SK-MEL-5 (cell line): ENCODE measurements at regions of chr18 and their contacts with region 1.

Region 1: GRCh38 chr18:58768293-58768974 is 96.2 kb upstream of the ZNF532 start:
- DNase-seq: peak; percentile 59

Region 2: DNA sequence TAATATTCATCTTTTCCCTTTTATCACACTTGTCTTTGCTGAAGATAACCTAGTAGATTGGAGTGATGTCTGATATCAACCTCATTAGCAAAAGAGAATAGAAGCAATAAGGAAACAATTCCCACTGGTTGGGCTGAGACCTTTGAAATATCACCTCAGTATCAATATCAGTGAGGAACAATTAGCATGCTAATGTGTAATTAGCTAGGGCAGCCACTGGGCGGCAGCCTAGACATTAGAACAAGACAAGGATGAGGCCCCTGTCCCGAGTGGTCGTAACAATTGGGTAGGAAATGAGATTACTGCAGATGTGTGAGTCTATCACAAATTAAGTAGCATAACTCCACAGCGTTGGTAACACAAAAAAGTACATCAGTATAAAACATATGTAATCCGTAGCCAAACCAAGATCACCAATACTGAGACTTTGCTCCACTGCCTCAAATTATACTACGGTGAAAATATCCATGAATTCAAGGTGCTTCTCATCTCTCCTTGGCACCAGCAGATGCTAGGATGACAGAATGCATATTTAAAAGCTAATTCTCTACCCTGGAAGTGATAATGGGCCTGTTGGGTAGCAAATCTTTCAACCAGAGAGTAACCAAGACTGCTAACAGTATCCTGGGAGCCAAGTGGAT is 238.6 kb before region 1 on chr18:
- in situ Hi-C with region 1: loop called (anchors 25 kb)
- DNase-seq: peak; percentile 69

Region 3: DNA sequence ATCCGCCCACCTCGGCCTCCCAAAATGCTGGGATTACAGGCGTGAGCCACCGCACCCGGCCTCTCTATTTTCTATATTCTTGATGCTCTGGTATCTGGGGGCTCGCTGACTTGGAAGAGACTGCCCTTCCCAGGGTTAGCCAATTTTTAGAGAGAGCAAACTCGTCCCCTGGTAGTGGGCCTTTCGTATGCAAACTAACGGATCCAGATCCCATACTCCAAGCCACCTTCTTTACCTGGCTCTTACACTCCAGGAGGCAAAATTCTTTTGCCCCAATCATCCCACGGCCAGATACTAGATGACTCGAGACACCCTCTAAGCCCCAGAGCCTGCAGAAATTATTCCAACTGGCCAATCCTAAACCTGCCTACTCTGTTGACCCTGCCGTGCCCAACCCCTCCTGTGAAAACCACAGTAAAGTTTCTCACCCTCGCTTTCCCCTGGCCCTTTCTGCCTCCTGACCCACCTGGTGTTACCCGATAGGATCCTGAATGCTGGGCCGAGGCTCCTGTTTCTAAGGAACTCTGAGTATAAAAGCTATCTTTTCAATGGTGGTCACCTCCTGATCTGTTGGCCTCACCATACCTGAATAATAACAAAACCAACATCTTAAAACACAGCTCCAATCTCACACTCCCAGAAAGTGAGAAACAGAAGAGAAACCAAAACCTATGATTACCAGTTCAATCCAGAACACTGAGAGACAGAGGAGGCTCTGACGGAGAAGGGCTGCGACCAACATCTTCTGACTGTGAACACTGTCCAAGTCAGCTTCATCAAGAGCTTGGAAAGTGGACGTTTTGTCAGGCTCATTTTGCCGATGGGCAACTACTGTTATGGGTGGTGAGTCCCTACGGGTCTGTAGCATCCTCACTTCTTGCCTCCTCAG is 38.6 kb after region 1 on chr18:
- in situ Hi-C with region 1: no loop called
- DNase-seq: no peak